ENCODE measurements at regions of chr16 and their contacts with region 1.

Region 1: GRCh38 chr16:20806168-20807050 is at the starts of genes ERI2 and REXO5:
- DNase-seq: peak; percentile 87
- H3K4me3 Mint-ChIP-seq: peak within 1 kb of the TSS; percentile 96
- H3K27ac Mint-ChIP-seq: peak within 1 kb of the TSS; percentile 94
- H3K4me1 Mint-ChIP-seq: peaks cover 8% of the 10 kb centered on the region
- H3K27me3 Mint-ChIP-seq: no peaks in the 10 kb centered on the region
- total RNA-seq, gene ERI2: 19.8 to 25.0 TPM
- total RNA-seq, gene REXO5: 24.3 to 25.7 TPM

Region 2: GRCh38 chr16:20741554-20742285 is 64.7 kb before region 1 on chr16 and contains the start of gene THUMPD1:
- CTCF ChIA-PET with region 1: interaction called, 4 read pairs
- POLR2A ChIA-PET with region 1: interaction called, 3 read pairs
- intact Hi-C with region 1: loop called (anchors 2 kb)
- DNase-seq: peak; percentile 99
- H3K4me3 Mint-ChIP-seq: peak within 1 kb of the TSS; percentile 92
- H3K27ac Mint-ChIP-seq: peak within 1 kb of the TSS; percentile 95
- H3K4me1 Mint-ChIP-seq: peaks cover 23% of the 10 kb centered on the region
- H3K27me3 Mint-ChIP-seq: no peaks in the 10 kb centered on the region
- total RNA-seq, gene THUMPD1: 42.7 to 43.1 TPM

Region 3: DNA sequence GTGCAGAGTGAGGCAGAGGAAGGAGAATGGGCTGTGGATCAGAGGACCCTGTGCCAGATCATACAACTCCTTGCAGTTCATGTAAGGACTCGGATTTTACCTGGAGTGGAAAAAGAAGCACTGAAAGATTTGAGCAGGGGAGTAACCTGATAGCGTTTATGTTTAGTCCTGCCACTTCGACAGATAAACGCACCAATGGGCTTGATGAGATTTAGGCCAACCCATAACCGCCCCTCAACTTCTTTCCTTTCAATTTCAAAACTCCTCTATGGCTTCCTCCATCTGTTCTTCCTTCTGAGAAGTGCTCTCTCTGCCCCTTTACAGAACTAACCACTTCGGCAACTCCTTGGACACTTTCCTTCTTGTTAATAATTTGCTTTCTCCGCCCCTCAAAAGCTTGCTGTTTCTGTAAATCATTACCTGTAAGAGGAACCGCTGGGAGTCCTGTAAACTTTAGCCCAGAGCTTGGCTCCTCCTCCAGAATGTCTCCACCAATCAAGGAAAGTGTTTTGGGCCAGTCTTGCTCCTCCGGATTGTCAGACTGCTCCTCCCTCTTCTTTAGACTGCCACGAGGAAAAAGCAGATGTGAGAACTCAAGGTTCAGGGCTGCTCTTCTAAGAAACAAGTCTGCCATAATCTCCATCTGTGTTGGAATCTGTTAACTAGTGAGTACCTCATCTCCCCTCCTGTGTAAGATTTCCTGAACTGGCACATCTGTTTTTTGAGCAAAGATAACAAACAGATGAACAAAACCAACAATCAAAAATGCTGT is 42.8 kb before region 1 on chr16 and contains the start of gene ACSM3:
- CTCF ChIA-PET with region 1: no interaction called
- POLR2A ChIA-PET with region 1: interaction called, 3 read pairs
- intact Hi-C with region 1: loop called (anchors 1 kb)
- DNase-seq: peak; percentile 76
- H3K4me3 Mint-ChIP-seq: peak within 1 kb of the TSS; percentile 79
- H3K27ac Mint-ChIP-seq: peak within 1 kb of the TSS; percentile 87
- H3K4me1 Mint-ChIP-seq: peaks cover 20% of the 10 kb centered on the region
- H3K27me3 Mint-ChIP-seq: no peaks in the 10 kb centered on the region
- total RNA-seq, gene ACSM3: 13.8 to 17.4 TPM

Region 4: GRCh38 chr16:20849587-20850390 is 43.4 kb after region 1 on chr16:
- CTCF ChIA-PET with region 1: interaction called, 4 read pairs
- POLR2A ChIA-PET with region 1: no interaction called
- intact Hi-C with region 1: loop called (anchors 5 kb)
- DNase-seq: peak; percentile 75
- H3K4me3 Mint-ChIP-seq: no peak overlapping the region
- H3K27ac Mint-ChIP-seq: no peak overlapping the region
- H3K4me1 Mint-ChIP-seq: peaks cover 11% of the 10 kb centered on the region
- H3K27me3 Mint-ChIP-seq: no peaks in the 10 kb centered on the region

Region 5: GRCh38 chr16:20874088-20874581 is 67.7 kb after region 1 on chr16:
- CTCF ChIA-PET with region 1: interaction called, 6 read pairs
- POLR2A ChIA-PET with region 1: no interaction called
- intact Hi-C with region 1: loop called (anchors 2 kb)
- DNase-seq: no peak
- H3K4me3 Mint-ChIP-seq: peak overlapping the region; percentile 34
- H3K27ac Mint-ChIP-seq: peak overlapping the region; percentile 81
- H3K4me1 Mint-ChIP-seq: peaks cover 46% of the 10 kb centered on the region
- H3K27me3 Mint-ChIP-seq: no peaks in the 10 kb centered on the region

Region 6: GRCh38 chr16:20900299-20901067 is 94.1 kb after region 1 on chr16 and contains the starts of genes DCUN1D3 and LYRM1:
- CTCF ChIA-PET with region 1: no interaction called
- POLR2A ChIA-PET with region 1: interaction called, 4 read pairs
- intact Hi-C with region 1: loop called (anchors 10 kb)
- DNase-seq: peak; percentile 94
- H3K4me3 Mint-ChIP-seq: peak within 1 kb of the TSS; percentile 81
- H3K27ac Mint-ChIP-seq: peak within 1 kb of the TSS; percentile 93
- H3K4me1 Mint-ChIP-seq: peaks cover 72% of the 10 kb centered on the region
- H3K27me3 Mint-ChIP-seq: no peaks in the 10 kb centered on the region
- total RNA-seq, gene DCUN1D3: 5.9 TPM
- total RNA-seq, gene LYRM1: 26.5 to 28.0 TPM

Region 7: GRCh38 chr16:20944861-20945574 is 138.6 kb after region 1 on chr16:
- CTCF ChIA-PET with region 1: no interaction called
- POLR2A ChIA-PET with region 1: interaction called, 4 read pairs
- intact Hi-C with region 1: loop called (anchors 5 kb)
- DNase-seq: peak; percentile 80
- H3K4me3 Mint-ChIP-seq: no peak overlapping the region
- H3K27ac Mint-ChIP-seq: no peak overlapping the region
- H3K4me1 Mint-ChIP-seq: peaks cover 25% of the 10 kb centered on the region
- H3K27me3 Mint-ChIP-seq: no peaks in the 10 kb centered on the region

Region 8: GRCh38 chr16:21158208-21159110 is 352.1 kb after region 1 on chr16 and contains the start of gene LDAF1:
- CTCF ChIA-PET with region 1: no interaction called
- POLR2A ChIA-PET with region 1: no interaction called
- intact Hi-C with region 1: no loop called
- DNase-seq: peak; percentile 86
- H3K4me3 Mint-ChIP-seq: peak within 1 kb of the TSS; percentile 77
- H3K27ac Mint-ChIP-seq: peak within 1 kb of the TSS; percentile 5
- H3K4me1 Mint-ChIP-seq: peaks cover 24% of the 10 kb centered on the region
- H3K27me3 Mint-ChIP-seq: no peaks in the 10 kb centered on the region
- total RNA-seq, gene LDAF1: 13.9 to 15.1 TPM